ENCODE measurements at regions of chr4 and their contacts with region 1.

Region 1: DNA sequence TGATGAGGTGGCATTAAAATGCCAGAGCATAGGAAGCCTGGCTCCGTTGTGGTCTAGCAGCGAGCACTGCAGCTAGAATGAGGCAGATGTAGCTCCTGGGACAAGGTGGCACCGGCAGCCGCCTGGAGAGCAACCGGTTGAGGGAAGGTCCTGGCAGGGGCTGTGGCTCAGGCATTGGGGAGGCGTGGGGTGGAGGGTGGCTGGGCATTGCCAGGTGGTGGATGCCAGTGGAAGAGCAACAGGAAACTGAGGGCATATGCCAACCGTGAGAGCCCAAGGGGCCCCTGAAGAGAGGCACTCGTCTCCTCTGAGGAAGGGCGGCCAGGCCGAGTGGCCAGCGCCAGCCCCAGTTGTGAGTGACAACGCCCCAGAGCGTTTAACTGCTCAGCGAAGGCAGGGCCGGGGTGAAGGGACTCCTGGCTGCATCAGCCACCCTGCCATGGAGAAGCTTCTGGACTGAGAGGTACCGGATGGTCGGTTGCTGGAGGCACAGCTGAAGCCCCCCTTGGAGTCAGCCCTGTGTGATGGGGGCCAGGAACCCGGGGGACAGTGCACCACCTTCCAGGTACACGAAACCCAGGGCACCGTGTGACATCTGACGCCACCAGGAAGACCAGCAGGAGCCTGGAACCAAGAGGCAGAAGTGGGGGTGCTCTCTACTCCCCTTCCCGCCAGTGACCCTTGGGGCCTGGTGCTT is 13.2 kb upstream of the PDE6B start:
- DNase-seq: no peak
- ATAC-seq: no peak
- H3K4me3 ChIP-seq: no peak overlapping the region
- H3K27ac ChIP-seq: no peak overlapping the region
- H3K4me1 ChIP-seq: peaks cover 9% of the 10 kb centered on the region
- H3K27me3 ChIP-seq: no peaks in the 10 kb centered on the region
- CTCF ChIP-seq: no peak

Region 2: GRCh38 chr4:498328-498904 is 113.8 kb before region 1 on chr4:
- CTCF ChIA-PET with region 1: no interaction called
- POLR2A ChIA-PET with region 1: no interaction called
- in situ Hi-C with region 1: no loop called
- intact Hi-C with region 1: no loop called
- DNase-seq: no peak
- ATAC-seq: peak; percentile 34
- H3K4me3 ChIP-seq: peak overlapping the region; percentile 86 to 92
- H3K27ac ChIP-seq: peak overlapping the region; percentile 88
- H3K4me1 ChIP-seq: peaks cover 11% of the 10 kb centered on the region
- H3K27me3 ChIP-seq: no peaks in the 10 kb centered on the region
- CTCF ChIP-seq: no peak

Region 3: DNA sequence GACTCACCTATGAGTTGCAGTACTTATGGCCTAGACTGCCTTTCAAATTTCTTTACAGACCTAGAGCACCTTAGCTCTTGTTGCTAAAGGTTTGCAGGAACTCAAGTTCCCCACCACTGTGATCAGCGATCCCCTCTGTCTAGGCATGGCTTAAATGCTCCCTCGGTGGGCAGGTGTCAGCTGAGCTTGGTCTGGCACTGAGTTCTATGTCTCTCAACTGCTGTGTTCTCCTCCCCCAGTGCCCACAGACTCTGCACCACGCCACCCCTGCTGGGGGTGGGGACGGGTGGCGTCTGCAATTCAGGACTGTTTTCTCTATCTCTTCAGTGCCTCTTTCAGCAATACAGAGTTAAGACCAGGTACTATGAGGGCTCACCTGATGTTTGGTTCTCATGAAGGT is 66.6 kb before region 1 on chr4:
- CTCF ChIA-PET with region 1: no interaction called
- POLR2A ChIA-PET with region 1: interaction called, 15 read pairs
- in situ Hi-C with region 1: no loop called
- intact Hi-C with region 1: no loop called
- DNase-seq: no peak
- ATAC-seq: no peak
- H3K4me3 ChIP-seq: no peak overlapping the region
- H3K27ac ChIP-seq: no peak overlapping the region
- H3K4me1 ChIP-seq: no peaks in the 10 kb centered on the region
- H3K27me3 ChIP-seq: no peaks in the 10 kb centered on the region; the same call in 1 of the 2 replicates
- CTCF ChIP-seq: no peak

Region 4: GRCh38 chr4:622071-622995 is 10.1 kb after region 1 on chr4:
- CTCF ChIA-PET with region 1: interaction called, 15 read pairs
- POLR2A ChIA-PET with region 1: no interaction called
- in situ Hi-C with region 1: no loop called
- intact Hi-C with region 1: no loop called
- DNase-seq: no peak
- ATAC-seq: no peak
- H3K4me3 ChIP-seq: no peak overlapping the region
- H3K27ac ChIP-seq: no peak overlapping the region
- H3K4me1 ChIP-seq: no peaks in the 10 kb centered on the region
- H3K27me3 ChIP-seq: no peaks in the 10 kb centered on the region; the same call in 1 of the 2 replicates
- CTCF ChIP-seq: no peak

Measured in Panc1 (cell line).